Activated CD4-positive, alpha-beta memory T cell treated with anti-CD3 and anti-CD28 coated beads, Interleukin-2, amount 10 ng/mL, durations not matched to agents 7 days and 5 days (primary cell): ENCODE measurements at regions of chr5 and their contacts with region 1.

Region 1: GRCh38 chr5:93800988-93801811 is 59.8 kb upstream of the POU5F2 start:
- DNase-seq: no peak
- H3K4me3 Mint-ChIP-seq: no peak overlapping the region
- H3K27ac Mint-ChIP-seq: no peak overlapping the region
- H3K4me1 Mint-ChIP-seq: peaks cover 3% of the 10 kb centered on the region
- H3K27me3 Mint-ChIP-seq: no peaks in the 10 kb centered on the region

Region 2: DNA sequence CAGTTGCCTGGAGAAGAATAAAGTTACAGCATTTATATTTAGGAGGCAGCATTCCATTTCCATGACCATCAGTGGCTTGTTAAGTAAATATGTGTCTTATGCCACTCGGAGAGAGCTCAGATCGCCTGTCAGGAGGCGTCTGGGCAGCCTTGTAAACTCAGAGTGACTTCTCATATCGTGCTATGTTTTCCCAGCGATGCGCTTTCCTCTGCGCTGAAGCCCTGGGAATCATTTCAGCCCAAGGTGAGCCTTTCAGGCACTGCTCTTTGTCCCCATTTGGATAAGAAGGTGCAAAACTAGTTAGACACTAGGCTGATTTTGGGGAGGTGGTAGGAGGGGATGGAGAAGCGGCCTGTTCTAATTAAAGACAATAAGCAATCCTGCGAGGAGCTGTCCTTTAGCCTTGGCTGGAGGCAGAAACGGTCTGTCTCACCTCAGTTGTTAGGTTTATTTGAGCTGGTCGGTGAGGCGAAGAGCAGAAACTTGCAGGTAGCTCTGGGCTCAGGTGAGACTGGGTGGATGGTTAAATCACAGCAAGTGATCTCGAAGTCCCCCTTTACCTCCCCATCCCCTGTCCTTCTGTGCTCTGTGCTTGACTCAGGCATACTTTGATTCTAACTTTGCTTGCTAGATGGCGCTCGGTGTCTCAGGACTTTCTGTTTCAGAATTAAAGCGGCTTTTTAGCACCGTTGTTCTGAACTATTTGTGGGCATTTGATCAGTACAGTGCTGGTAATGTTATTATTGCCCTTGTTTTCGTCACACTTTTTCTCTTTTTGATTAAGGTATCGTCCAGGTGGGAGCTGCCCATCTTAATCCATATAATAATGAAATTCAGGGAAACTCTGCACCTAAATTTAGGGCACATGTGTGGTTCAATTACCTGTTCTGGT is 193.6 kb before region 1 on chr5:
- CTCF ChIA-PET with region 1: interaction called, 17 read pairs
- POLR2A ChIA-PET with region 1: no interaction called
- DNase-seq: peak; percentile 33
- H3K4me3 Mint-ChIP-seq: no peak overlapping the region
- H3K27ac Mint-ChIP-seq: no peak overlapping the region
- H3K4me1 Mint-ChIP-seq: peaks cover 14% of the 10 kb centered on the region
- H3K27me3 Mint-ChIP-seq: peaks cover 84% of the 10 kb centered on the region

Region 3: DNA sequence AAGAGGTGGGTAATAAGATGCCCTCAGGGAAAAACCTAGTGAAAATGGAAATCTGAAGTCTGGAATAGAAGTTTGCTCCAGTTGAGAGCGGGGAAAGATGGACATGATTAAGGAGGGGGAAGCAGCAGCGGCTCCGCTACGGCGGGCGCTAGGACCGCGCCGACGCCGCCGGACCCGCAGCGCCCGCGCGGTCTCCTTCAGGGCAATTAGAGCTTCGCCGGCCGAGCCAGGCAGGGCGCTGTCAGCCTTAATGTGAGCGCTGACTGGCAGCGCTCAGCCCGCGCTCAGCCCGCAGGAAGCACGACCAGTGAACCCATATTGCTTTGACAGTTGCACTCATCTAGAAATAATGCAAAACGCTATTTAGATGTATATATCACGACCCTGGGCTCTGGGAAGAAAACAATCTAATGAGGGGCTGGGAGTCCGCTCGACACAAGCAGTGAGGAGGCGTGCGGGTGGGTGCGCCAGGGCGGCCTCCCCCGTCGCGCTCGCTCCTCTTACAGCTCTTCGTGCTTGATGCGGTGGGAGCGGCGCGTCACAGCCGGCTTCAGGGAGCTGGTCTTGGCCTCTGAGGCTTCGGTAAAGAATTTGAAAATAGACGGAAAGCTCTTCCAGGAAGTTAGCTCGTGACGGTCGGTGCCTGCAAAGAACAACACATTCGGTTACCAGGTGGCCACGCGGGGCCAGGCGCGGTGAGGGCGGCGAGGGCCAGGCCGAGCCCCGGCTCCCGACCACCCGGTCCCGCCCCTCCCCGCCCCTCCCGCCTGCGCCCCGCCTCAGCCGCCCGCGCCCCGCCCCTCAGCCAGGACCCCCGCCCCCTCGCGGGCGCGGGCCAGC is 180.5 kb before region 1 on chr5:
- CTCF ChIA-PET with region 1: interaction called, 21 read pairs
- POLR2A ChIA-PET with region 1: no interaction called
- DNase-seq: peak; percentile 67
- H3K4me3 Mint-ChIP-seq: peak overlapping the region; percentile 81
- H3K27ac Mint-ChIP-seq: no peak overlapping the region
- H3K4me1 Mint-ChIP-seq: peaks cover 21% of the 10 kb centered on the region
- H3K27me3 Mint-ChIP-seq: peaks cover 41% of the 10 kb centered on the region

Region 4: DNA sequence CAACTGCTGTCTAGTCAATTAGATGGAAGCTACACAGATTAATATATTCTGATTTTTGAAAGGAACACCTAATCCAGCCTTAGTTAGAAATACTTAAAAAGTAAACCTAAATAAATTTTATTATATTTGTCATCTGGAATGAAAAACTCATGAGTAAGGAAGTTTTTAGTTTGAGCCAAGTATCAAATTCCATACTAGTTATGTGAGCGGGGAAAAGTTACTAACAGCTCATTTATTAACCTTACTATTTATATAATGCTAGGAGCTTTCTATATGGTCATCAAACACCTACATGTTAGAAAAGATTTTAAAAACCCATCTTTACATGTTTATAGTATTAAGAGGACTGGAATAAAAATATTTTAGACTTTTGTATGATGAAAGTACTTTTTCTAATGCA is 18.2 kb before region 1 on chr5:
- CTCF ChIA-PET with region 1: interaction called, 10 read pairs
- POLR2A ChIA-PET with region 1: no interaction called
- DNase-seq: no peak
- H3K4me3 Mint-ChIP-seq: no peak overlapping the region
- H3K27ac Mint-ChIP-seq: no peak overlapping the region
- H3K4me1 Mint-ChIP-seq: no peaks in the 10 kb centered on the region
- H3K27me3 Mint-ChIP-seq: no peaks in the 10 kb centered on the region